ENCODE measurements at regions of chr1 and their contacts with region 1.

Region 1: DNA sequence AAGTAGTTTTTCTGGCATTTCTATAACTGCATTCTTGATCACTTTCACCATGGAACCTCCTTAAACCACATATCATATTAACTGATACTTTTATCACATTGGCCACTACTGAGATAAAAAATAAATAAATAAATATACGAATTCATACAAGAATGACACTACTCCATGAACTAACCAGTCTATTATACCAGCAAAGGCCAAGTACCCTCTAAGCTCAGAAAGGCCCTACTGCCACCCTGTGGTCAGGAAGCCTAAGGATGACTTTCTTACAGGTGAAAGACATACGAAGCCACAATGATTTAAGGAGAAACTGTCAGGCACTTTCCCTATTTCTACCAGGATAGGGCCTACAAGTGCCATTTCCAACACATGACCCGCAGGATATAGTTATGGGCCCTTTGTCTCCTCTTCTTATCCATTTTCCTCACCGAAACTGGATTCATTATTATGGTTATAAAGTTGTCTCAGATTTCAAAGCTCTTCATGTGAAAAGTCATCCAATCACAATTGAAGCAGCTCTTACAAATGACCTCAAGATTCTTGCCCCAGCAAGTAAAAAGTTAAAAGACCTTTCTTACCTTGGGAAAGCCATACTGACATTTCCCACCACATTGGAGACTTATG is 23.9 kb downstream of the DNAJC8 start:
- DNase-seq: peak in 1 of 2 donors; percentile 39
- H3K4me3 ChIP-seq: no peak overlapping the region
- H3K27ac ChIP-seq: no peak overlapping the region
- H3K4me1 ChIP-seq: no peaks in the 10 kb centered on the region
- H3K27me3 ChIP-seq: no peaks in the 10 kb centered on the region
- CTCF ChIP-seq: peak in 2 of 3 donors; percentile 48 to 61
- POLR2A ChIP-seq: no peak

Region 2: GRCh38 chr1:27010989-27011764 is 1197.8 kb before region 1 on chr1:
- intact Hi-C with region 1: no loop called
- DNase-seq: peak; percentile 89 to 93
- H3K4me3 ChIP-seq: peak overlapping the region; percentile 40 to 80 (median 64)
- H3K27ac ChIP-seq: peak overlapping the region; percentile 92 to 94
- H3K4me1 ChIP-seq: peaks cover 0 to 24% of the 10 kb centered on the region in 2 donors
- H3K27me3 ChIP-seq: no peaks in the 10 kb centered on the region
- CTCF ChIP-seq: no peak
- POLR2A ChIP-seq: no peak

Region 3: GRCh38 chr1:28112388-28113241 is 96.3 kb before region 1 on chr1:
- intact Hi-C with region 1: loop called (anchors 10 kb)
- DNase-seq: no peak
- H3K4me3 ChIP-seq: no peak overlapping the region
- H3K27ac ChIP-seq: no peak overlapping the region
- H3K4me1 ChIP-seq: no peaks in the 10 kb centered on the region
- H3K27me3 ChIP-seq: no peaks in the 10 kb centered on the region
- CTCF ChIP-seq: no peak
- POLR2A ChIP-seq: no peak

Region 4: GRCh38 chr1:28160782-28161266 is 48.1 kb before region 1 on chr1:
- intact Hi-C with region 1: no loop called
- DNase-seq: no peak
- H3K4me3 ChIP-seq: no peak overlapping the region
- H3K27ac ChIP-seq: peak overlapping the region; percentile 27 to 61
- H3K4me1 ChIP-seq: no peaks in the 10 kb centered on the region
- H3K27me3 ChIP-seq: no peaks in the 10 kb centered on the region
- CTCF ChIP-seq: no peak
- POLR2A ChIP-seq: no peak

Region 5: GRCh38 chr1:28259307-28260167 is 50.6 kb after region 1 on chr1 and contains the start of gene SESN2:
- intact Hi-C with region 1: no loop called
- DNase-seq: peak; percentile 99
- H3K4me3 ChIP-seq: peak within 1 kb of the TSS; percentile 84 to 94 (median 90)
- H3K27ac ChIP-seq: peak within 1 kb of the TSS; percentile 86 to 90
- H3K4me1 ChIP-seq: no peaks in the 10 kb centered on the region
- H3K27me3 ChIP-seq: no peaks in the 10 kb centered on the region
- CTCF ChIP-seq: no peak
- POLR2A ChIP-seq: peak; percentile 94
- total RNA-seq, gene SESN2: 10.0 to 16.0 (median 12.5) TPM

Region 6: GRCh38 chr1:29368936-29369932 is 1160.3 kb after region 1 on chr1:
- intact Hi-C with region 1: no loop called
- DNase-seq: no peak
- H3K4me3 ChIP-seq: no peak overlapping the region
- H3K27ac ChIP-seq: no peak overlapping the region
- H3K4me1 ChIP-seq: no peaks in the 10 kb centered on the region
- H3K27me3 ChIP-seq: peaks cover 0 to 17% of the 10 kb centered on the region in 2 donors
- CTCF ChIP-seq: no peak
- POLR2A ChIP-seq: no peak